Activated T-helper 2 cell treated with anti-CD3 and anti-CD28 coated beads, Interferon-gamma antibody, Interleukin-2, Interleukin-4, amounts not matched to agents 10 μg/mL and 5 μg/mL and 100 μg/mL, durations not matched to agents 14 hours and 24 hours and 36 hours (primary cell): ENCODE measurements at regions of chrX and their contacts with region 1.

Region 1: GRCh38 chrX:71365876-71366673 is at the start of gene TAF1:
- DNase-seq: peak; percentile 88
- H3K4me3 Mint-ChIP-seq: peak within 1 kb of the TSS; percentile 98
- H3K27ac Mint-ChIP-seq: peak within 1 kb of the TSS; percentile 99
- H3K4me1 Mint-ChIP-seq: peaks cover 20% of the 10 kb centered on the region
- H3K27me3 Mint-ChIP-seq: no peaks in the 10 kb centered on the region
- total RNA-seq, gene TAF1: 48.0 and 49.6 TPM in 2 replicates

Region 2: DNA sequence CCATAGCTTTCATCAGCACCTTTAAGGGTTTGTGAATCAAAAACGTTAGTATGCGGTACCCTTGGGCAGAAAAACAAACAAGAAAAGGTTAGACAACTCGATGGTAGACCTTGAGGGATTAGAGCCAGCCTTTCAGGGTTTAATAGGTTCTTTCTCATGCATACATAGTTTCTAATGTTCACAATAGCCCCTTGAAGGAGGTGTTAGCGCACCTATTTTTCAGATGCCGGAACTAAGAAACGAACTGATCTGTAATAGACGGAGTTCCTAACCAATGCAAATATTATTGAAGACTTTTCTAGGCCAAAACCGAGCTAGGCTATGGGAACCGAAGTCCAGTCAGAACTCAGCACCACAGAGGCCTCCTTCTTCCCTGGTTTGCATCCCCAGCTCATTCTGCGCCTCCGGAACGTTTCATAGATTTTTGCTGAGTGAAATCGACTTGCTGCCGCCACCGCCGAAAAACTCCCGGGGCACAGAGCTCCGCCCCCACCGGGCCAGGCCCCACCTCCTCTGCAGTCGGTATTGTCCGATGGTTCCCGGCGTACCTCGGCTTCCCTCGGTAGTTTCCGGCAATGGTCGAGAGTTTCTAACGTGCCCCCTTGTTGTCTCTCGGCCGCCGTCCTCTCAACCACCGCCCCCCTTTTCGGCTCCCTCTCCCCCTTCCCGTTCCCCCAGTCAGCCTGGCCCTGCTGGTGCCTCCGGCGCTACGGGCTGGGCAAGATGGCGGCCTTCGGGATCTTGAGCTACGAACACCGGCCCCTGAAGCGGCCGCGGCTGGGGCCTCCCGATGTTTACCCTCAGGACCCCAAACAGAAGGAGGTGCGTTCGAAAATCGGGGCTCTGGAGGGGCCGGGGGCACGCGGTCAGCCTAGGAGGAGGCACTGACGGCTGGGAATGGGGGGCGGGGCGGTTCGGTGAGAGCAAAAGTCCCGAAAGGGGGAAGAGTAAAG is 247.8 kb before region 1 on chrX and contains the start of gene MED12:
- intact Hi-C with region 1: loop called (anchors 10 kb)
- DNase-seq: peak; percentile 74
- H3K4me3 Mint-ChIP-seq: peak within 1 kb of the TSS; percentile 80
- H3K27ac Mint-ChIP-seq: peak within 1 kb of the TSS; percentile 83
- H3K4me1 Mint-ChIP-seq: peaks cover 16% of the 10 kb centered on the region
- H3K27me3 Mint-ChIP-seq: no peaks in the 10 kb centered on the region
- total RNA-seq, gene MED12: 71.1 and 71.3 TPM in 2 replicates

Region 3: DNA sequence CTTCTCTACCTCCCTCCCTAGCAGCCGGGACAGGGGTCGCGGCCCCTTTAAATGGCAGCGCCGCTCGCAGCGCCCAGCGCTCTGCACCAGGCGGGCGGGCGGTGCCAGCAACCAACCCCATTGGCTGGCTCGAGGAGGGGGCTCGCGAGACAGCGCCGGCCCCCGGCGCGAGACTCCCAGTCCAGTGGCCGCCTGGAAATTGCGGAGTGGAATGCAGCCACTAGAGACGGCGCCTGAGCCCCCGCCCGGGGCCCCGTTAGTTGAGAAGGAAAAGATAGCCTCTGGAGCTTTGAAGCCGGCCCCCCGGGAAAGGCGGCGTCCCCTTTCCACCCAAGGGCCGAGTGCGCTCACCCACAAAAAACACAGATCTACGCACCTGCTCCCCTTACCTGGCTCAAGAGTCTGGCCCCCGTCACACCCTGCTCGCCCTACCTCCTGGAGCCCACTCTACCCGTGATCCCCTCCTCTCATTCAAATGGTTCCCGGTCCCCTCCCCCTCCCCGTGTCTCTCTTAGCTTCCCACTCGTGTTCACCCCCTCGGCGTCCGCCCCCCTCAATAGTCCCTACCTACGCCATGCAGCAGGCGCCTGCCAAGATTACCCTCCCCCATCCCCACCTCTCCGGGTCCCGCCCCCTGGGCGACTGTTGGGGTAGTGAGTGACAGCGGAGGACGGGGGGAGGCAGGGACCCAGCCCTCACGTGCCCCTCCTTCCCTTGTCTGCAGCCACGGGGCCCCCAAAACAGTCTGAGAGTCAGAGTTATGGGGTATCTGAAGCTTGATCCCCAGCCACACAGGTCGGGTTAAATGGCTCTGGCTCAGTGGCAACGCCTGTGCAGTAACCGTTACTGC is 111.8 kb before region 1 on chrX and contains the start of gene ZMYM3:
- intact Hi-C with region 1: loop called (anchors 1 kb)
- DNase-seq: peak; percentile 72
- H3K4me3 Mint-ChIP-seq: peak within 1 kb of the TSS; percentile 88
- H3K27ac Mint-ChIP-seq: peak within 1 kb of the TSS; percentile 93
- H3K4me1 Mint-ChIP-seq: peaks cover 27% of the 10 kb centered on the region
- H3K27me3 Mint-ChIP-seq: no peaks in the 10 kb centered on the region
- total RNA-seq, gene ZMYM3: 26.8 and 31.4 TPM in 2 replicates

Region 4: DNA sequence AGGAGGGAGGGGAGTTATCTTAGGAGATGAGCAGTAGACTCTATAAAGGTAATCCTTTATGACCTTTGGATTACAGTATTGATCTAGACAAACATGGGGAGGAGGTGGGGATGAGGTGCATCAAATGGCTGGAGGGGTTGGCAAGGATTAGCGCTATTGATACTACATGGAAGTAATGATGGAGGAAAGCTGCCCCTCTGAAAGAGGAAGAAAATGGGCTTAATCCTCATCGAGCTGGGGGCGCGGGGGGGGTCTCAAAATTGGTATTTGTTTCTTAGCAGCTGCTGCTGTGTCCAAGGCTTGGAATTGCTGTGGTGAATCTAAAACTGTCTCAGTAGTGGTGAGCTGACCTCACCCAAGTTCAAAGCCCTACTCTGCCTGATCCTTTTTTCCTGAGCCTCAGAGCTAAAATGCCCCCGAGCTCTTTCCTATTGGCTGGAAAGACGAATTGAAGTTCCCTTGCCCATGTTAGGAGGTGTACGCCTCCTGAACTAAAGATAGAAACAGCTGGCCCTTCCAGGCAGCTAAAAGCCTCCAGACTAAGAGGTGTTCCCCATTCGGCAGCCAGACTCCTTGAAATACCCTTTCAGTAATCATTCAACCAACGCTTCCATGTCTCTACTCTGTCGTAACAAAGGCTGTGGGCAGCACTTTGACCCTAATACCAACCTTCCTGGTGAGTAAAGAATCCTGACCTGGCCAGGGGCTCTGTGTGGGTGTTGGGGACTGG is 64.7 kb before region 1 on chrX and contains the start of gene ITGB1BP2:
- intact Hi-C with region 1: loop called (anchors 5 kb)
- DNase-seq: no peak
- H3K4me3 Mint-ChIP-seq: no peak within 1 kb of the TSS
- H3K27ac Mint-ChIP-seq: peak within 1 kb of the TSS; percentile 46
- H3K4me1 Mint-ChIP-seq: peaks cover 21% of the 10 kb centered on the region
- H3K27me3 Mint-ChIP-seq: no peaks in the 10 kb centered on the region
- total RNA-seq, gene ITGB1BP2: 6.1 and 6.5 TPM in 2 replicates